AG04450 (cell line): ENCODE measurements at regions of chr13 and their contacts with region 1.

Region 1: GRCh38 chr13:48769107-48769704 is 115.5 kb downstream of the CYSLTR2 start:
- DNase-seq: peak; percentile 86
- H3K4me3 ChIP-seq: no peak overlapping the region
- H3K27ac ChIP-seq: no peak overlapping the region
- H3K27me3 ChIP-seq: no peaks in the 10 kb centered on the region
- CTCF ChIP-seq: peak; percentile 100

Region 2: GRCh38 chr13:48220981-48221685 is 548.1 kb before region 1 on chr13:
- CTCF ChIA-PET with region 1: no interaction called
- POLR2A ChIA-PET with region 1: no interaction called
- DNase-seq: no peak
- H3K4me3 ChIP-seq: no peak overlapping the region
- H3K27ac ChIP-seq: no peak overlapping the region
- H3K27me3 ChIP-seq: peaks cover 2% of the 10 kb centered on the region
- CTCF ChIP-seq: no peak

Region 3: GRCh38 chr13:48334534-48335127 is 434.6 kb before region 1 on chr13:
- CTCF ChIA-PET with region 1: interaction called, 28 read pairs
- POLR2A ChIA-PET with region 1: no interaction called
- DNase-seq: no peak
- H3K4me3 ChIP-seq: no peak overlapping the region
- H3K27ac ChIP-seq: no peak overlapping the region
- H3K27me3 ChIP-seq: no peaks in the 10 kb centered on the region
- CTCF ChIP-seq: peak; percentile 54

Region 4: DNA sequence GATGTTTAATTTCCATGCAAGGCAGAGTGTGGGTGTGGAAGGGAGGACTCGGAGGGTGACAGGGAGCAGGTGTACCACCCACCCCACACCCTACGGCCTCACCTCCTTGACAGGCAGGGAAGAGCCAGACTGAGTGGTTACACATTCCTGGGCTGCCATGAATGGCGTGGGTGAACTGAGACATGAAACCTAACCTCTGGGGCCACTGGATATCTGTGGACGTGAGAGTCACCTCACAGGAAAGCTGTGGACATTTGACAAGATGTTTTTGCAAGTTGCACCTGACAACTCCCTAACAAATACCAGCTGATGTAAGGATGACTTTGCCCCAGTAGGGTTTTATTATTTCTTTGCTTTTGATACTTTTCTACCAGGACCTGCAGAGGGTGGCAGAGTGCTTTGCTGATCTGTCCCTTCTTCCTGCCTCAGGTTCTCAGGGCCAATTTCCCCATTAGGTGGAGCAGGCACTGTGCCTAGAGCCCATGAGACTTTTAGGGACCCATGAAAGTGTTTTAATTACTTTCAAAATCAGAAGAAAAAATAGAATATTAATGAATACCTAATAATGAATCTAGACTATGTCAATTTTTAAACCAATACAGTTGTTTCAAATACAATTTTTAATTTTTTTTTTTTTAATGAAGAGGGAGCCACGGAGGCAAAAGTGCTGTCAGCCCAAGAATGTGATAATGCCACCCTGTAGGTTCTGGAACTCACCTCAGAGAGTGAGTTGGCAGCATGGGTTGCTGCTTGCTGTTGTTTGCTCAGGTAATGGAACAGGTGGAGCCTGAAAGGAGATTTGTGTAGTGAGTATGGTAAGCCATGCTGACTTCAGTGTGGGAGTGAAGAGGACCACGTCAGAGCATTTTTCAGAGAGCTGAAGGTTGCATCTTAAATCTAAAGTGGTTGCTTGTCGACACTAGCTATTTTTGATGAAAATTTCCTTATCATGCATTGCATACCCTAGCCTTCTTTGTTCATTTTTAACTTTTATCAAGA is 173.5 kb before region 1 on chr13:
- CTCF ChIA-PET with region 1: interaction called, 152 read pairs
- POLR2A ChIA-PET with region 1: no interaction called
- DNase-seq: peak; percentile 26
- H3K4me3 ChIP-seq: no peak overlapping the region
- H3K27ac ChIP-seq: no peak overlapping the region
- H3K27me3 ChIP-seq: peaks cover 10% of the 10 kb centered on the region
- CTCF ChIP-seq: peak; percentile 76

Region 5: DNA sequence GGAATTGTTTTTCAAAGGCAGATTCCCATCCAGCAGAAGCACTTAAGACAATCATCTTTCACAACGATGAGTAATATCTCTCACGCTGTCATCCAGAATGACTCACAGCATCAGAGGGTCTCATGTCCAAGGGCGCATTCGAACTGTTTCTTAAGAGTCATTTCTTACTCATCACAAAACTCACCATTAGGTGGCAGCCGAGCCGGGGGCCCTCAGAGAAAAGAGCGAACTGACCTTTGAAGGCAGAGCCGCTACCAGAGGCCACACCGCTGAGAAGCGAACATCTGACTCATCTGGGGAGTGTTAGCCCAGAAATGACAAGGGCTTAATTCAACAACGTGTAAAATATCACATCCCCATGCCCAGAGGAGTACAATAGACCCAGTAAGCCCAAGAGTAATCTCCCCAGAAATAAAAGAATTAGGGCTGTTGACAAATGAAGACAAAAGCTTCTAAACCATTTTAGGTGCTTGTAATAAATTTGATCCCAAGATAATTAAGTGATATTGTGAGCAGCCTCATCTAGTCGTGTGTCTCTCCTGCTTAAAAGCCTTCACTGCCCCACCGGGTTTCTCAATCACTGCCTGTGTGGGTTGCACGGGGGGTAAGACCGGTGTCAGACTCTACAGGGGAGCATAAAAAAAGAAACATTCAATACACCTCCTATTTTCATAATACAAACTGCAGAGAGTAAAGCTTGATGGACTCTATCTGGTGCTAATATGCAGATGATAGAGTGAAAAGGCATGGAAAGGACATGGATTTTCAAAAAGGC is 19.3 kb before region 1 on chr13:
- CTCF ChIA-PET with region 1: interaction called, 27 read pairs
- POLR2A ChIA-PET with region 1: no interaction called
- DNase-seq: peak; percentile 86
- H3K4me3 ChIP-seq: no peak overlapping the region
- H3K27ac ChIP-seq: peak overlapping the region; percentile 60
- H3K27me3 ChIP-seq: no peaks in the 10 kb centered on the region
- CTCF ChIP-seq: peak; percentile 61